ENCODE measurements at regions of chr1 and their contacts with region 1.

Region 1: DNA sequence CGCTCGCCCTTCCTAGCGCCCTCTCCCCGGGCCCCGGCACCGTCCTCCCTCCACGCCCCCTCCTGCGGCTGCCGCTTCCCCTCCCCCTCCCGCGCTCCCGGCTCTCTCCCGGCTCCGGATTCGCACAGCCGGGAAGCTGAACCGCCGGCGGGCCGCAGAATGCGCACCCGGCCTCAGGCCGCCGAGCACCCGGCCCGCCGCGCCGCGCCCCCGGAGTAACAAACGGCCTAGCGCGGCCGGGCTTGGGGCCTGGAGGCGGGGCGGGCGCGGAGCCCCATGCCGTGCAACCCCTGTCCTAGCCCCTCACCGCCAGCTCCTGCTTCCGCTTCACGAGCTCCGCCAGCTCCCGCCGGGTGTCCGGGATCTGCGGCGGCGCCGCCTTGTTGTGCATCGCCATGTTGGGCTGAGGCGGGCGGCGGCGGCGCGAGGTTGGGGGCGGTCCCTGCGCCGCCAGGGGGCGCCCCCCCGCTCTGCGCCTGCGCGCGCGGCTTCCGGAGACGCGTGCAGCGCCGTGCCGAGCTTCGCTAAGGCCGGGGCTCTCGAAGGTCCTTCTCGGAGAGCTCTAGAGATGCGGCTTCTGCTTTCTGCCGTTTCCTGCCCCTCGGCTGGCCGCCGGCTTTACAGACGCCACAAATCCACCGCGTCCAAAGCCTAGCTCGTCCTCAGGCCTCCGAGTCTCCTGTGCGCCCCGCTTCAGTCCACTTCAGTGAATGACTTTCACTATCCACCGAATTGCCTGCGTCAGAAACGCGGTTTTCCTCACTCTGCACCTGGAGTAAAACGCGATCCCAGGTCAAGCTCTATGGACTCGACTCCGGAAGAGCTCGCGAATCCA is at the start of gene MEAF6:
- DNase-seq: peak; percentile 80 to 88
- ATAC-seq: peak; percentile 97 to 99 (median 99)
- H3K4me3 ChIP-seq: peak within 1 kb of the TSS; percentile 59 to 96 (median 83)
- H3K27ac ChIP-seq: peak within 1 kb of the TSS; percentile 69 to 99 (median 96)
- H3K4me1 ChIP-seq: peaks cover 6 to 30% (median 20%) of the 10 kb centered on the region in 9 donors
- H3K27me3 ChIP-seq: peaks cover 0 to under 1% (median 0%) of the 10 kb centered on the region in 7 donors
- CTCF ChIP-seq: peak; percentile 53 to 92 (median 77)
- total RNA-seq, gene MEAF6: 27.8 to 59.9 (median 38.0) TPM

Region 2: GRCh38 chr1:37486680-37487618 is 27.6 kb before region 1 on chr1:
- intact Hi-C with region 1: no loop called
- DNase-seq: peak; percentile 74 to 84
- ATAC-seq: peak; percentile 59 to 84 (median 77)
- H3K4me3 ChIP-seq: no peak overlapping the region
- H3K27ac ChIP-seq: peak overlapping the region; percentile 43 to 79 (median 70)
- H3K4me1 ChIP-seq: peaks cover 18 to 42% (median 34%) of the 10 kb centered on the region in 9 donors
- H3K27me3 ChIP-seq: no peaks in the 10 kb centered on the region
- CTCF ChIP-seq: peak in 8 of 9 donors; percentile 93 to 99 (median 98)

Region 3: GRCh38 chr1:37498872-37499617 is 15.5 kb before region 1 on chr1:
- intact Hi-C with region 1: no loop called
- DNase-seq: peak in 1 of 2 donors; percentile 57
- ATAC-seq: peak; percentile 69 to 97 (median 88)
- H3K4me3 ChIP-seq: no peak overlapping the region
- H3K27ac ChIP-seq: peak overlapping the region in 5 of 10 donors; percentile 10 to 61 (median 28)
- H3K4me1 ChIP-seq: peaks cover 0 to 32% (median 14%) of the 10 kb centered on the region in 9 donors
- H3K27me3 ChIP-seq: no peaks in the 10 kb centered on the region
- CTCF ChIP-seq: no peak

Region 4: GRCh38 chr1:37553927-37554808 is 39.6 kb after region 1 on chr1 and contains the start of gene SNIP1:
- intact Hi-C with region 1: loop called in 2 of 10 experiments (anchors 2 kb)
- DNase-seq: peak; percentile 86 to 95
- ATAC-seq: peak; percentile 94 to 98 (median 96)
- H3K4me3 ChIP-seq: peak within 1 kb of the TSS; percentile 75 to 100 (median 93)
- H3K27ac ChIP-seq: peak within 1 kb of the TSS; percentile 46 to 95 (median 85)
- H3K4me1 ChIP-seq: peaks cover 11 to 53% (median 35%) of the 10 kb centered on the region in 9 donors
- H3K27me3 ChIP-seq: no peaks in the 10 kb centered on the region
- CTCF ChIP-seq: no peak
- total RNA-seq, gene SNIP1: 6.0 to 12.1 (median 9.2) TPM

Measured in heart right ventricle (tissue), 16 donors.